ENCODE measurements at regions of chr5 and their contacts with region 1.

Region 1: DNA sequence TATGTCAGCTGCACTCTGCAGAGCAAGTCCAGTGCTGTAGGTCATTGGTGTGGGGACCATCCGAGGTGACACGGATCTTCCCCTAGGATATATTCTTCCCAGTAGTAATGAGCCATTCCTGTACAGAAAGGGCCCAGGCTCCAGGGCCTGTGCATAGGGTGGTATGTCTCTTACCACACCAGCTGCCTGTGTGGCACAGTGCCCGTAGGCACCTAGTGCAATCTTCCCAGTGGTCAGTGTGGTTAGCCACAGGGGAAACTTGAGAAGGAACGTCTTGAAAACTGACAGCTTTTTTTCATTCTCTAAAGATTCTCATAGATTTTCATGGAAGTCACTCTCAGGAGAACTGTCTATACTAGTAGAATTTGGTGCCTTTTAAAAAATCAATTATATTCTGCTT is 39.8 kb downstream of the CYSTM1 start:
- DNase-seq: no peak
- H3K4me3 ChIP-seq: no peak overlapping the region
- H3K4me3 Mint-ChIP-seq: no peak overlapping the region
- H3K27ac Mint-ChIP-seq: no peak overlapping the region
- H3K4me1 ChIP-seq: peaks cover 41% of the 10 kb centered on the region
- H3K4me1 Mint-ChIP-seq: peaks cover 35% of the 10 kb centered on the region
- H3K27me3 ChIP-seq: no peaks in the 10 kb centered on the region
- H3K27me3 Mint-ChIP-seq: no peaks in the 10 kb centered on the region
- CTCF ChIP-seq: no peak

Region 2: DNA sequence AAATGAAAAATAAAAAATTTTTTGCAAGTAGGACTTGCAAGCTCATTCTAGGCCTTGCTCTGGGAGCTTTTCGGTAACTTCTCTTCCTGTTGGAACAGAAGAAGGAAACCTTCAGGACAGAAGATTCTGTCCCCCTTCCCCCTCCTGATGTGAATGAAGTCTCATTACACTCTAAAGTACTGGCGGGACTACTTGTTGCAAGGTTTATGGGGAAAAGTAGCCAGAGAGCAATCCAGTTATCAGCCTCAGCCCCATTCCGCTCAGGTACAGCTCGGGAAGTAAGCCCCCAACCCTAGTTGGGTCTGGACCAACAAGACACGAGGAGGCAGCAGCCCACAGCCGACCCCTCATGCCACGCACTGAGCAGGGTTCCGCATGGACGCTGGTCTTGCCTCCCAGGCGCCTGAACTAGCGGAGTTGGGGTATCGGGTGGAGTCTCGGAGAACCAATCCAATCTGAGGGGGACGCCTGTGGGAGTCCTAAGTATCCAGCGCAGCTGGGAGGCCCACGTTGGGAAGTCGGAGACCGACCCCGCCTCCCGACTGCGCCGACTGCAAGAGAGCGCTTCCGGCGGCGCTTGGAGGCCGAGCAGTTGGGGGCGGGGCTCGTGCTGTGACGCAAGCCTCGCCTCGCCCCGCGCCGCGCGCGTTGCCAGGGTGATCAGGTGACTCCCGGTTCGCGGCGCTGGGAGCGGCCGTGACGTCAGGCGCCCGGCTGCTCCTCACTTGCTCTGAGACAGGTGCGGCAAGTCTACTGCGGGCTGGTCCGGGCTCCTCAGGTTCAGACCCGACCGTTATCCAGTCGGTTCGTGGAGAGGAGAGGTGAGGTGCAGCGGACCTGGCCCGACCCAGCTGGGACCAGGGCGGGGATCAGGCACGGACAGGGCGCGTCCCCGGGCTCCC is 40.1 kb before region 1 on chr5 and contains the start of gene CYSTM1:
- CTCF ChIA-PET with region 1: interaction called, 5 read pairs
- POLR2A ChIA-PET with region 1: interaction called, 4 read pairs
- intact Hi-C with region 1: loop called (anchors 1 kb)
- DNase-seq: peak; percentile 96 to 99
- H3K4me3 ChIP-seq: peak within 1 kb of the TSS; percentile 74
- H3K4me3 Mint-ChIP-seq: peak within 1 kb of the TSS; percentile 99
- H3K27ac Mint-ChIP-seq: peak within 1 kb of the TSS; percentile 100
- H3K4me1 ChIP-seq: peaks cover 5% of the 10 kb centered on the region; the same call in 1 of the 2 replicates
- H3K4me1 Mint-ChIP-seq: peaks cover 11% of the 10 kb centered on the region
- H3K27me3 ChIP-seq: no peaks in the 10 kb centered on the region
- H3K27me3 Mint-ChIP-seq: no peaks in the 10 kb centered on the region
- CTCF ChIP-seq: no peak
- total RNA-seq, gene CYSTM1: 93.5 and 102 TPM in 2 replicates

Region 3: DNA sequence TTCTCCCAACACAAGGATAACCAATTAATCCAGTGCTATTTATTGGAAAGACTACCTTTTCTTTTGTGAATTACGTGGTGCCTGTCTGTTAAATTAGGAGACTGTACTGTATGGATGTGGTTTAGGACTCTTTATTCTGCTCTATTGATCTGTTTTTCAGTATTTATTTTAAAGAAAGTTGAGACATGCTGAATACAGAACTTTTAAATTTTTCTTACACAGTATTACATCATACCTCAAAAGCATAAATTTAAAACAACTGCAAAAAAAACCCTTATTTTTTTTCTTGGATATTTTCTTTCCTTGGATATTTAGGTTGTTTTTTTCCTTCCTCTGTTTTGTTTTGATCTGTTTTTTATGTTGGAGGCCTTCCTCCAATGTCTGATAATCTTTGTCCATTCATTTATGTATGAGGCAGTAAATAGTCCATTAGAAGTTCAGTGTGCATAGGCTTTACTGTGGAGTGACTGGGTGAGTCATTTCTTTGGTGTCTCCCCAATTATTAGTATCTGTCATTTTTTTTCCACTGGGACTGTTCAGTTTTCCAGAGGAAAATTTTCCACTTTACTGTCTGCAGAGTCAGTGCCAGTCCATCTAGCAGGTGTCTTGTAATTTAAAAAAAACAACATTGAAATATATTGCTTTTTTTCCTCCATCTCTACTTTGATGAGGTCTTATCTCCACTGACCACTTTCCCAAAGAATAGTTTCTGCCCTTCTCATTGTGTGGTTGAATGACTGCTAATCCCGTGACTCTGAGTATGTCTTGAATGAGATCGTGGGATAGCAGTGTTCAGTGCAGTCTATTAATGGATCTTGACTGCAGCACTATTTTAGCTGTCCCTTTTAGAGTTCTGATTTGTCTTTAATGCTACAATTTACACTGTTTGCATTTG is 24.6 kb before region 1 on chr5:
- CTCF ChIA-PET with region 1: no interaction called
- POLR2A ChIA-PET with region 1: interaction called, 8 read pairs
- intact Hi-C with region 1: loop called (anchors 1 kb)
- DNase-seq: no peak
- H3K4me3 ChIP-seq: no peak overlapping the region
- H3K4me3 Mint-ChIP-seq: no peak overlapping the region
- H3K27ac Mint-ChIP-seq: peak overlapping the region; percentile 68
- H3K4me1 ChIP-seq: 0 out of 2 replicates have a peak, but pooled peaks cover 10% of the 10 kb centered on the region
- H3K4me1 Mint-ChIP-seq: peaks cover 26% of the 10 kb centered on the region
- H3K27me3 ChIP-seq: no peaks in the 10 kb centered on the region
- H3K27me3 Mint-ChIP-seq: no peaks in the 10 kb centered on the region
- CTCF ChIP-seq: no peak

Region 4: GRCh38 chr5:140235791-140236551 is 21.1 kb after region 1 on chr5:
- CTCF ChIA-PET with region 1: interaction called, 7 read pairs
- POLR2A ChIA-PET with region 1: interaction called, 5 read pairs
- intact Hi-C with region 1: loop called (anchors 1 kb)
- DNase-seq: peak; percentile 57 to 63
- H3K4me3 ChIP-seq: no peak overlapping the region
- H3K4me3 Mint-ChIP-seq: no peak overlapping the region
- H3K27ac Mint-ChIP-seq: peak overlapping the region; percentile 23
- H3K4me1 ChIP-seq: peaks cover 27% of the 10 kb centered on the region
- H3K4me1 Mint-ChIP-seq: peaks cover 29% of the 10 kb centered on the region
- H3K27me3 ChIP-seq: no peaks in the 10 kb centered on the region
- H3K27me3 Mint-ChIP-seq: no peaks in the 10 kb centered on the region
- CTCF ChIP-seq: peak in 1 of 2 experiments; percentile 13

Region 5: GRCh38 chr5:140336388-140336787 is 121.6 kb after region 1 on chr5:
- CTCF ChIA-PET with region 1: no interaction called
- POLR2A ChIA-PET with region 1: no interaction called
- intact Hi-C with region 1: no loop called
- DNase-seq: peak in 1 of 2 experiments; percentile 30
- H3K4me3 ChIP-seq: no peak overlapping the region
- H3K4me3 Mint-ChIP-seq: no peak overlapping the region
- H3K27ac Mint-ChIP-seq: no peak overlapping the region
- H3K4me1 ChIP-seq: peaks cover 13% of the 10 kb centered on the region; the same call in 1 of the 2 replicates
- H3K4me1 Mint-ChIP-seq: peaks cover 11% of the 10 kb centered on the region
- H3K27me3 ChIP-seq: no peaks in the 10 kb centered on the region
- H3K27me3 Mint-ChIP-seq: no peaks in the 10 kb centered on the region
- CTCF ChIP-seq: no peak